Activated naive CD4-positive, alpha-beta T cell treated with anti-CD3 and anti-CD28 coated beads for 36 hours (primary cell): ENCODE measurements at regions of chr2 and their contacts with region 1.

Region 1: DNA sequence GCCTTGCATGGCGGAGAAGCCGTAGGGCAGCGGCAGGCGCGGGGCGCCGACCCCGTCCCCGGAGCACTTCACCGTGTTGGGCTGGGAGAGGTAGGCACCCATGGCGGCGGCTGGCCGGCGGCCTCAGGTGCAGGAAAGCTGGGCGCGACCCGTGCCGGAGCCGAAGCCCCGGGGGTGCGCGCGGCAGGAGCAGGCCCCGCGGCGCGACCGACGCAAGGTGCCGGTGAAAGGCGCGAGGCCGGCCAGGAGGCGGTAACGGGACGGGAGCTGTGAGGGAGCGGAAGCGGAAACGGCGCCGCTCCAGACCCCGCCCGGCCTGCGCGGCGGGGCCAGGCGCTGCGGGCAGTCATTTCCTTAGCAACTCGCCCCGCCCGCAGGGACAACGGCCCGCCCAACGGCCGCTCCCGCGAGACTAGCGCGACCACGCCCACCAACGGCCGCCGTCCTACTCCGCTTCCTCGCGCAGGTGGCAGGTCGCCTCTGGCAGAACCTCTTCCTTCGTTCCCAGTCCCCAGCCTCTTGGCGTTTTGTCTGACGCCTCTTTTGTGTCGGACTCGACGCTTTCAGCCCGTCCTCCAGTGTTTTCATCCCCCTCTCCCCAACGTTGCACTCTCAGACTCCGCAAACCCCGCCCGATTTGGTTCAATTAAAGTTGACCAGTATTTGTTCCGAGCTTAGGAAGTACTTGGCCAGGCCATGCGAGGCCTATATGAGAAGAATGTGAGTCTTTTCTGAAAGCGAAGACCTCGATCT is at the start of gene PPM1G:
- DNase-seq: peak; percentile 97
- H3K4me3 Mint-ChIP-seq: peak within 1 kb of the TSS; percentile 89
- H3K27ac Mint-ChIP-seq: peak within 1 kb of the TSS; percentile 87
- H3K4me1 Mint-ChIP-seq: peaks cover 32% of the 10 kb centered on the region
- H3K27me3 Mint-ChIP-seq: no peaks in the 10 kb centered on the region
- total RNA-seq, gene PPM1G: 92.3 to 101 TPM

Region 2: GRCh38 chr2:27211829-27212627 is 197.5 kb before region 1 on chr2 and contains the starts of genes ATRAID and SLC5A6:
- CTCF ChIA-PET with region 1: no interaction called
- intact Hi-C with region 1: loop called (anchors 1 kb)
- DNase-seq: peak; percentile 88
- H3K4me3 Mint-ChIP-seq: peak within 1 kb of the TSS; percentile 98
- H3K27ac Mint-ChIP-seq: peak within 1 kb of the TSS; percentile 99
- H3K4me1 Mint-ChIP-seq: peaks cover 29% of the 10 kb centered on the region
- H3K27me3 Mint-ChIP-seq: no peaks in the 10 kb centered on the region
- total RNA-seq, gene ATRAID: 80.5 to 80.8 TPM
- total RNA-seq, gene SLC5A6: 22.6 to 24.8 TPM

Region 3: GRCh38 chr2:27380626-27381545 is 28.6 kb before region 1 on chr2 and contains the start of gene ZNF513:
- CTCF ChIA-PET with region 1: interaction called, 5 read pairs
- intact Hi-C with region 1: loop called (anchors 1 kb)
- DNase-seq: peak; percentile 93
- H3K4me3 Mint-ChIP-seq: peak within 1 kb of the TSS; percentile 79
- H3K27ac Mint-ChIP-seq: peak within 1 kb of the TSS; percentile 86
- H3K4me1 Mint-ChIP-seq: peaks cover 30% of the 10 kb centered on the region
- H3K27me3 Mint-ChIP-seq: no peaks in the 10 kb centered on the region
- total RNA-seq, gene ZNF513: 4.9 to 5.2 TPM

Region 4: DNA sequence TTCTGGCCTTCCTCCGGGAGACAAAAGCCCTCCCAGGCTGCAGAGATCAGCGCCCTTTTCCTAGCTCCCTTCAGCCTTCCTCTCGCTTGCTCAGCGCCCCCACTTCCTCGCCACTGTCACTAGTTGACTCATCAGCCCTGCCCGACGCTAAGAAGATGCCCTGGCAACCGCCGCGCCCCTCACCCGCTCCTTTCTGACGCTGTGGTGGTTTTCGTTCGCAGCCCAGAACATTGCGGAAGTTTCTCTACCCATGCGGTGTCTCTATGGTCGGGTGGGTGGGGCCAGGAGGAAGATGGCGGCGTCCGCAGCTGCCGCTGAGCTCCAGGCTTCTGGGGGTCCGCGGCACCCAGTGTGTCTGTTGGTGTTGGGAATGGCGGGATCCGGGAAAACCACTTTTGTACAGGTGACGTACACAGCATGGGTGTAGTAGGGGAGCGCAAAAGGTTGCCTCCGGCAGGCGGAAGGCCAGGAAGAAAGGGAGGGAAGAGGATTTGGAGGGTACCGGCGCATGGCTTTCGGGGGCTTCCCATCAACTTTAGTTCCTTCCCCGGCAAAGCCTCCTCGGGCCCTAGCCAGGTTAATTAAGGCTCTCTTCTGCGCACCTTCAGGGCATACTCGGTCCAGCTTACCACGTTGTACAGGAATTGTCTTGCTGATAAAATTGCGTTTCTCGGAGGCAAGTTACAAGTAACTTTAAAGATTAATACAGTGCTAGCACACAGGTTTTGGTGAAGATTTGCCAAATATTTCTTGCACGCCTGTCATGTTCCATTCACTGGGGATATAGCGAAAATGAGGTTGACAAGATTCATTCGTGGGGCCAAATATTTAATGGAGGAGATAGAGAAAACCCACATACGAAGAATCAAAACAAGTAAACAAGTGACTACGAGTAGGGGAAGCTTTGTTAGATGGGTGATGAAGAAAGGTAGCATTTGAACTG is 219.5 kb after region 1 on chr2 and contains the starts of genes CCDC121 and GPN1:
- CTCF ChIA-PET with region 1: no interaction called
- intact Hi-C with region 1: loop called (anchors 2 kb)
- DNase-seq: peak; percentile 98
- H3K4me3 Mint-ChIP-seq: no peak within 1 kb of the TSS
- H3K27ac Mint-ChIP-seq: peak within 1 kb of the TSS; percentile 52
- H3K4me1 Mint-ChIP-seq: peaks cover 13% of the 10 kb centered on the region
- H3K27me3 Mint-ChIP-seq: no peaks in the 10 kb centered on the region
- total RNA-seq, gene CCDC121: 0.17 to 0.30 TPM
- total RNA-seq, gene GPN1: 44.9 to 45.1 TPM